ENCODE measurements at regions of chr1 and their contacts with region 1.

Region 1: DNA sequence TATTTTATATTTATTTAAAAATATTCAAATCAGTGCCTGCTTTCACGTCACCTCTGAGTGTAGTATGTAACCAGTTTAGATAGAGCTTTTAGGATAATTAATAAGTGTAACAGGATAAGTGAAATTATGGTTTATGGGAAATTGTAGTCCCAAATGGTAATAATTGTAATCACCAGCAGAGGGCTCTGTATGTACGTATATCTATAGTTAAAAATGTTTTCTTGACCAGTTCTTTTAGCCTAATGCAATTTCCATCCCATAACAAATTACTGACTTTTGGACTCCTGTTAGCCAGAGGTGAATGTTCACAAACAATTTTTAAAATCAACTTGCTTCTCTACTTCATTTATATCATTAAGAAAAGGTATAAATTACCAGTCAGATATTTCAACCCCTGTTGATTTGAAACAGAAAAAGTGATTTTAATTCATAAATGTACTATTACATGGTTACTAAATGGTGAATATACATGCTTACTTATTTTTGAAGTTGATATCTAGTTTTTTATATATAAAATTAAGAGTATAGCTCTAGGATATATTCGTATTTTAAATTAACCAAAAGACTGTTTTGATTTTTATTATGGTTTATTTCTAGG is 25.3 kb downstream of the SLC30A7 start:
- DNase-seq: peak; percentile 25
- H3K4me3 ChIP-seq: no peak overlapping the region
- H3K27ac ChIP-seq: no peak overlapping the region
- H3K4me1 ChIP-seq: no peaks in the 10 kb centered on the region
- H3K27me3 ChIP-seq: no peaks in the 10 kb centered on the region
- CTCF ChIP-seq: peak; percentile 46 to 51

Region 2: GRCh38 chr1:99906535-99906934 is 1014.7 kb before region 1 on chr1:
- CTCF ChIA-PET with region 1: no interaction called
- dilution Hi-C with region 1: no loop called
- in situ Hi-C with region 1: no loop called
- intact Hi-C with region 1: no loop called
- DNase-seq: no peak
- H3K4me3 ChIP-seq: no peak overlapping the region
- H3K27ac ChIP-seq: no peak overlapping the region
- H3K4me1 ChIP-seq: no peaks in the 10 kb centered on the region
- H3K27me3 ChIP-seq: no peaks in the 10 kb centered on the region
- CTCF ChIP-seq: no peak

Region 3: GRCh38 chr1:101025657-101026504 is 104.7 kb after region 1 on chr1 and contains the start of gene DPH5:
- CTCF ChIA-PET with region 1: no interaction called
- dilution Hi-C with region 1: no loop called
- in situ Hi-C with region 1: no loop called
- intact Hi-C with region 1: loop called (anchors 10 kb)
- DNase-seq: peak; percentile 88
- H3K4me3 ChIP-seq: peak within 1 kb of the TSS; percentile 71 to 97 (median 94)
- H3K27ac ChIP-seq: peak within 1 kb of the TSS; percentile 80
- H3K4me1 ChIP-seq: no peaks in the 10 kb centered on the region
- H3K27me3 ChIP-seq: no peaks in the 10 kb centered on the region
- CTCF ChIP-seq: no peak
- total RNA-seq, gene DPH5: 21.2 to 47.0 TPM

Region 4: GRCh38 chr1:101136739-101137138 is 215.5 kb after region 1 on chr1:
- CTCF ChIA-PET with region 1: no interaction called
- dilution Hi-C with region 1: no loop called
- in situ Hi-C with region 1: no loop called
- intact Hi-C with region 1: loop called (anchors 10 kb)
- DNase-seq: no peak
- H3K4me3 ChIP-seq: no peak overlapping the region
- H3K27ac ChIP-seq: no peak overlapping the region
- H3K4me1 ChIP-seq: peaks cover 12% of the 10 kb centered on the region
- H3K27me3 ChIP-seq: no peaks in the 10 kb centered on the region
- CTCF ChIP-seq: peak in 1 of 2 donors; percentile 15

Region 5: DNA sequence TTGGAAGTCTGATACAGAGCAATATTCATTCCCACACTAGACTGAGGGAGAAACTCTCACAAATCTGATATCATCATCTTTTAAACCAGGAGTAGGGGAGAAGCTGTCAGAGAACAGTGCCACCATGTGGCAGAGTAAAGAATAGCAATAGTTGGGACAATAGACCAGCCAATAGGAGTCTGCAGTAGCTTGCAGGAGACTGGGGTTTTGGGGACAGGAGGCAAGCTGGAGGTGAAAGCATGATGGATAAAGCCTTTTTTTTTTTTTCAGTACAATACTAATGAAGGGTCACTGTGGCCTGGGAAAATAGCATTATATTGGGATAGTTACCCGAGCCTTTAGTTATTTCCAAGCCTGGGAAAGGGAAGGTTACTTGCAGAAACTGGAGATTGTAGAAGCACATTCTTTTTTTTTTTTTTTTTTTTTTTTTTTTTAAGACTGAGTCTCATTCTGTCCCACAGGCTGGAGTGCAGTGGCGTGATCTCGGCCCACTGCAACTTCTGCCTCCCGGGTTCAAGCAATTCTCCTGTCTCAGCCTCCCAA is 436.3 kb after region 1 on chr1:
- CTCF ChIA-PET with region 1: no interaction called
- dilution Hi-C with region 1: no loop called
- in situ Hi-C with region 1: no loop called
- intact Hi-C with region 1: loop called (anchors 1 kb)
- DNase-seq: peak; percentile 62
- H3K4me3 ChIP-seq: no peak overlapping the region
- H3K27ac ChIP-seq: no peak overlapping the region
- H3K4me1 ChIP-seq: no peaks in the 10 kb centered on the region
- H3K27me3 ChIP-seq: peaks cover 2% of the 10 kb centered on the region
- CTCF ChIP-seq: peak; percentile 82 to 91

Measured in mammary epithelial cell (primary cell).